Activated CD8-positive, alpha-beta T cell treated with anti-CD3 and anti-CD28 coated beads, Interleukin-2, amount 10 ng/mL, durations not matched to agents 7 days and 5 days (primary cell): ENCODE measurements at regions of chr17 and their contacts with region 1.

Region 1: GRCh38 chr17:80899402-80900268 is 92.0 kb upstream of the CHMP6 start:
- DNase-seq: peak; percentile 88
- ATAC-seq: peak; percentile 79
- H3K4me3 Mint-ChIP-seq: no peak overlapping the region
- H3K27ac Mint-ChIP-seq: peak overlapping the region; percentile 77
- H3K4me1 Mint-ChIP-seq: peaks cover 64% of the 10 kb centered on the region
- H3K27me3 Mint-ChIP-seq: no peaks in the 10 kb centered on the region

Region 2: GRCh38 chr17:80426681-80427326 is 472.8 kb before region 1 on chr17:
- CTCF ChIA-PET with region 1: interaction called, 12 read pairs
- POLR2A ChIA-PET with region 1: no interaction called
- DNase-seq: peak; percentile 89
- ATAC-seq: peak; percentile 98
- H3K4me3 Mint-ChIP-seq: no peak overlapping the region
- H3K27ac Mint-ChIP-seq: no peak overlapping the region
- H3K4me1 Mint-ChIP-seq: peaks cover 27% of the 10 kb centered on the region
- H3K27me3 Mint-ChIP-seq: no peaks in the 10 kb centered on the region

Region 3: DNA sequence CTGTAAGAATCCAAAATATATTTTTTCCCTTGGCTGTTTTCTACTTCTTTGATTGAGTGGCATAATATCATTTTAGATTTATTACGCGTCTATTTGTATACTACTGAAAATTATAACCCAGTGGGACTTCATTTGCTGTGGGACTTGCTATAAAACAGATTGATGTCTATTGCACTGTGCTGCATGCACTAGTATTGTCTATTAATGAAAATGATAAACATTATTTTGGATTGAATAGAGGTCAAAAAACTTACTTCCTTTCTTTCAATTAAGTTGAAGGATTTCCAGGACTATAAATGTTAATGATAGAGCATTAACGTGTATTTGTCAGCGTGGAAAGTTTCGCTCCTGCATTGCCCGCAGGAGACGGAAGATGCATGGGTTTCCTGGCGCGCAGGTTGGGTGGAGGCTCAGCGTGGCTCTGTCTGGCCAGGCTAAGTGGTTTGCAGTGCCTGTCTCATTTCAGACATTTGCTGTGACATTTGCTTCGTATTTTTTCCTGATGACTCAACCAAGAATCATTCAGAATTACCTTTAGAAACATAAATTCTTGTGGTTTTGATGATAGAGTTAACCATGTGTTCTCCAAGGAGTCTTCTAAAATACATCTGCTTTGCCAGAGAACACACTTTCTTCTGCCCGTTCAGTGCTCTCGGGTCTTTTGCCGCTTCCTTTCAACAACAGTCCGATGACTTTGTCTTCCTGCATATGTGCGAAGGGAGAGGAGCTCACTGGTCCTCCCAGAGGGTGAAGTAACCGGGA is 138.3 kb before region 1 on chr17:
- CTCF ChIA-PET with region 1: interaction called, 10 read pairs
- POLR2A ChIA-PET with region 1: no interaction called
- DNase-seq: peak; percentile 76
- ATAC-seq: peak; percentile 79
- H3K4me3 Mint-ChIP-seq: peak overlapping the region; percentile 74
- H3K27ac Mint-ChIP-seq: peak overlapping the region; percentile 99
- H3K4me1 Mint-ChIP-seq: peaks cover 88% of the 10 kb centered on the region
- H3K27me3 Mint-ChIP-seq: no peaks in the 10 kb centered on the region

Region 4: DNA sequence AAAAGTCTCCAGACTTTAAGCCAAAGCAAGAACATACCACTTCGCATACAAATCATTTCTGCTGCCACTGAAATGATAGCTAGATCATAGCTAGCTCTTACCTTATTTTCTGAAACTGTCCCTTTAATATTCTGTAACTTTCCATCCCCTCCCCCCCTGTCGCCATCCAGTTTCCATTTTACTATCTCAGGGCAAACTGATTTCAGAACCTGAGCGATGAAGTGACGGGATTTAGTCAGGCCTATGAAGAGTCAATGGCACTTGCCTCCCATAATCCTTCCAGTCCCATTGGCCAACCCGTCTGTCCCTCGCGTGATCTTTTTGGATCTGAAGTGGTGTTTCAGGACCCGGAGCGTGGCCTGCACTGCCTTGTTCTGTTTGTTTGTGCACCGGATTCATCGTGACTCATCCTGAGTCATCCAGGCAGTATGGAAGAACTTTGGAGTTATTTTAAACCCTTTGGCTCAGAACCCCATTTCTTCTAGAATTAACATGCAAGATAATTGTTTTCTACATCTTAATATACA is 107.8 kb before region 1 on chr17:
- CTCF ChIA-PET with region 1: interaction called, 13 read pairs
- POLR2A ChIA-PET with region 1: no interaction called
- DNase-seq: peak; percentile 65
- ATAC-seq: peak; percentile 11
- H3K4me3 Mint-ChIP-seq: peak overlapping the region; percentile 71
- H3K27ac Mint-ChIP-seq: peak overlapping the region; percentile 97
- H3K4me1 Mint-ChIP-seq: peaks cover 75% of the 10 kb centered on the region
- H3K27me3 Mint-ChIP-seq: no peaks in the 10 kb centered on the region

Region 5: GRCh38 chr17:80855948-80856862 is 43.4 kb before region 1 on chr17:
- CTCF ChIA-PET with region 1: interaction called, 14 read pairs
- POLR2A ChIA-PET with region 1: no interaction called
- DNase-seq: peak; percentile 93
- ATAC-seq: peak; percentile 95
- H3K4me3 Mint-ChIP-seq: peak overlapping the region; percentile 54
- H3K27ac Mint-ChIP-seq: peak overlapping the region; percentile 94
- H3K4me1 Mint-ChIP-seq: peaks cover 97% of the 10 kb centered on the region
- H3K27me3 Mint-ChIP-seq: no peaks in the 10 kb centered on the region

Region 6: GRCh38 chr17:80981062-80981902 is 81.6 kb after region 1 on chr17:
- CTCF ChIA-PET with region 1: no interaction called
- POLR2A ChIA-PET with region 1: no interaction called
- DNase-seq: peak; percentile 39
- ATAC-seq: peak; percentile 59
- H3K4me3 Mint-ChIP-seq: no peak overlapping the region
- H3K27ac Mint-ChIP-seq: no peak overlapping the region
- H3K4me1 Mint-ChIP-seq: peaks cover 10% of the 10 kb centered on the region
- H3K27me3 Mint-ChIP-seq: peaks cover 4% of the 10 kb centered on the region

Region 7: GRCh38 chr17:81083125-81083765 is 183.6 kb after region 1 on chr17:
- CTCF ChIA-PET with region 1: no interaction called
- POLR2A ChIA-PET with region 1: no interaction called
- DNase-seq: no peak
- ATAC-seq: no peak
- H3K4me3 Mint-ChIP-seq: no peak overlapping the region
- H3K27ac Mint-ChIP-seq: no peak overlapping the region
- H3K4me1 Mint-ChIP-seq: peaks cover 6% of the 10 kb centered on the region
- H3K27me3 Mint-ChIP-seq: no peaks in the 10 kb centered on the region